Esophagus muscularis mucosa (tissue), 4 donors: ENCODE measurements at regions of chr11 and their contacts with region 1.

Region 1: GRCh38 chr11:8964324-8965320 is at the start of gene TMEM9B:
- DNase-seq: peak; percentile 97
- H3K4me3 ChIP-seq: peak within 1 kb of the TSS; percentile 68 to 83 (median 72)
- H3K27ac ChIP-seq: peak within 1 kb of the TSS; percentile 91 to 98 (median 95)
- H3K4me1 ChIP-seq: peaks cover 26 to 46% (median 41%) of the 10 kb centered on the region in 4 donors
- H3K27me3 ChIP-seq: no peaks in the 10 kb centered on the region
- CTCF ChIP-seq: no peak
- EP300 ChIP-seq: no peak
- POLR2A ChIP-seq: peak; percentile 86
- total RNA-seq, gene TMEM9B: 13.3 to 24.4 (median 20.5) TPM

Region 2: DNA sequence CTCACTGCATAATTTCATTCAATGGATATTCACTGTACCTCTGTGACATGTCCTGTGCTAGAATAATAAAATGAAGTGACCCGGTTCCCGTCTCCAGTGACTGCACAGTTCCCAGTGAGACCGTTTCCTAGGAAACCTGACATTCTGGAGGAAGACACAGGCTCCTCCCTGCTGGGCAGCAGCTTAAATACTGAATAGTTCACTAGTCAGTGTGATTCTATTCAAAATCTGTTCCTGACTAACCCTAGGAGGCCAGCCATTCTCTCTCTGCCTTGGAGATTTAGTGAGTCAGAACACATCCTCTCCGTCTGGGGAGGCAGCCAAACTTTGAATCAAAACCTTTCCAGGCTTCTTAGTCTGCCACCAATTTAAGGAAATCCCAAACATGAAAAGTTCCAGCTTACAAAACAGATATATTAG is 293.4 kb before region 1 on chr11:
- intact Hi-C with region 1: loop called (anchors 5 kb)
- DNase-seq: no peak
- H3K4me3 ChIP-seq: no peak overlapping the region
- H3K27ac ChIP-seq: peak overlapping the region; percentile 75 to 85 (median 82)
- H3K4me1 ChIP-seq: peaks cover 16 to 22% (median 21%) of the 10 kb centered on the region in 4 donors
- H3K27me3 ChIP-seq: no peaks in the 10 kb centered on the region
- CTCF ChIP-seq: no peak
- EP300 ChIP-seq: no peak
- POLR2A ChIP-seq: no peak

Region 3: DNA sequence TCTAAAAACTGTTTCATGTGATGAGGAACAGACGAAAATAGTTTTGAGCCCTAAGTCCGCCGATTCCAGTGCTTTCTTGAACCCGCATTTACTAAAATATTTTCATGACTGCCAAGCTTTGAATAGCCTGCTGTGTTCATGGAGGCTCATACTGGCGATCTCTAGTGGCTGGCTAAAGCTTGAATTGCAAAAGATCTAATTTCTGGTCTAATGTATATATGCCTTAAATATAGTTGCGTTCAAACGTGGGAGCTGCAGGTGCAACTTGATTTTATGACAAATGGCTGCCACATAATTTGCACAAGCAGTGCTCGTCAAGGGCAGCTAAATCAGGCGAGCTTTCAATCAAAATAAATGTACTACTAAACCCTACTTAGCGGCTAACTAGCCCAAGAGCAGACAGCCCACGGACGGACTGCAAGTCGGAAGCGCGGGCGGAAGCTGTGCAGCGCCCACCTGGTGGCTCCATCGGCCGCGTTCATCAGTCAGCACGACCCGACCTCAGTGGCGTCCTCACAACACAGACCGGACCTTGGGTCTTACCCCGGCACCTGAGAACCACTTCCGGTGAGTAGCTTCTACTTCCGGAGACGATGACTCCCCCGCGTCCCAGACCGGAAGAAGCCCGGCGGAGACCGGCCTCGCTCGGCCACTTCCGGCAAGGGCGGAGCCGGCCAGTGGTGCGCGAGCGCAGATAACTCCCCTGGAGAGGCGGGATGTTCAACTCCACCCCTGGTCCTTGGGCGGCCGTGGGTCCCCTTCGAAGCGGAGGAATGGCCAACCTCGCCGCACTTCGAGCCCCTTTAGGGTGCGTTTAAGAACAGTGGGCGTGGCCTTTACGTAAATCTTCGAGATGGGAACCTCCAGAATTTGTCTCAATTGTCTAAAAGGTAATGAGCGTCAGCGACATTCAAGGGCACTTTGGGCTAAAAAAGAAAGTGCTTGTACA is 275.9 kb before region 1 on chr11:
- intact Hi-C with region 1: loop called (anchors 5 kb)
- DNase-seq: peak; percentile 97
- H3K4me3 ChIP-seq: peak overlapping the region; percentile 57 to 80 (median 64)
- H3K27ac ChIP-seq: peak overlapping the region; percentile 79 to 90 (median 84)
- H3K4me1 ChIP-seq: peaks cover 21 to 47% (median 39%) of the 10 kb centered on the region in 4 donors
- H3K27me3 ChIP-seq: no peaks in the 10 kb centered on the region
- CTCF ChIP-seq: peak; percentile 19 to 46 (median 37)
- EP300 ChIP-seq: no peak
- POLR2A ChIP-seq: peak; percentile 34

Region 4: GRCh38 chr11:8832571-8833260 is 131.9 kb before region 1 on chr11:
- intact Hi-C with region 1: loop called (anchors 10 kb)
- DNase-seq: no peak
- H3K4me3 ChIP-seq: peak overlapping the region in 1 of 4 donors; percentile 3
- H3K27ac ChIP-seq: peak overlapping the region; percentile 62 to 80 (median 80)
- H3K4me1 ChIP-seq: peaks cover 15 to 31% (median 25%) of the 10 kb centered on the region in 4 donors
- H3K27me3 ChIP-seq: no peaks in the 10 kb centered on the region
- CTCF ChIP-seq: no peak
- EP300 ChIP-seq: no peak
- POLR2A ChIP-seq: no peak

Region 5: GRCh38 chr11:8911029-8911826 is 53.4 kb before region 1 on chr11 and contains the start of gene AKIP1:
- intact Hi-C with region 1: loop called (anchors 2 kb)
- DNase-seq: peak; percentile 96
- H3K4me3 ChIP-seq: peak within 1 kb of the TSS; percentile 79 to 95 (median 92)
- H3K27ac ChIP-seq: peak within 1 kb of the TSS; percentile 91 to 98 (median 98)
- H3K4me1 ChIP-seq: peaks cover 20 to 50% (median 45%) of the 10 kb centered on the region in 4 donors
- H3K27me3 ChIP-seq: no peaks in the 10 kb centered on the region
- CTCF ChIP-seq: peak in 1 of 3 experiments; percentile 2
- EP300 ChIP-seq: no peak
- POLR2A ChIP-seq: peak; percentile 24
- total RNA-seq, gene AKIP1: 30.5 to 56.4 (median 41.7) TPM